Activated naive CD4-positive, alpha-beta T cell treated with anti-CD3 and anti-CD28 coated beads for 36 hours (primary cell): ENCODE measurements at regions of chr3 and their contacts with region 1.

Region 1: GRCh38 chr3:171561596-171562323 is 101.6 kb upstream of the TNIK start:
- DNase-seq: no peak
- H3K4me3 Mint-ChIP-seq: peak overlapping the region; percentile 40
- H3K27ac Mint-ChIP-seq: peak overlapping the region; percentile 88
- H3K4me1 Mint-ChIP-seq: peaks cover 22% of the 10 kb centered on the region
- H3K27me3 Mint-ChIP-seq: no peaks in the 10 kb centered on the region

Region 2: GRCh38 chr3:171491361-171491760 is 70.4 kb before region 1 on chr3:
- CTCF ChIA-PET with region 1: no interaction called
- intact Hi-C with region 1: loop called (anchors 1 kb)
- DNase-seq: no peak
- H3K4me3 Mint-ChIP-seq: peak overlapping the region; percentile 51
- H3K27ac Mint-ChIP-seq: peak overlapping the region; percentile 62
- H3K4me1 Mint-ChIP-seq: peaks cover 34% of the 10 kb centered on the region
- H3K27me3 Mint-ChIP-seq: no peaks in the 10 kb centered on the region